ENCODE measurements at regions of chr14 and their contacts with region 1.

Region 1: GRCh38 chr14:105617201-105617777 is 90.9 kb downstream of the TMEM121 start:
- DNase-seq: no peak

Region 2: DNA sequence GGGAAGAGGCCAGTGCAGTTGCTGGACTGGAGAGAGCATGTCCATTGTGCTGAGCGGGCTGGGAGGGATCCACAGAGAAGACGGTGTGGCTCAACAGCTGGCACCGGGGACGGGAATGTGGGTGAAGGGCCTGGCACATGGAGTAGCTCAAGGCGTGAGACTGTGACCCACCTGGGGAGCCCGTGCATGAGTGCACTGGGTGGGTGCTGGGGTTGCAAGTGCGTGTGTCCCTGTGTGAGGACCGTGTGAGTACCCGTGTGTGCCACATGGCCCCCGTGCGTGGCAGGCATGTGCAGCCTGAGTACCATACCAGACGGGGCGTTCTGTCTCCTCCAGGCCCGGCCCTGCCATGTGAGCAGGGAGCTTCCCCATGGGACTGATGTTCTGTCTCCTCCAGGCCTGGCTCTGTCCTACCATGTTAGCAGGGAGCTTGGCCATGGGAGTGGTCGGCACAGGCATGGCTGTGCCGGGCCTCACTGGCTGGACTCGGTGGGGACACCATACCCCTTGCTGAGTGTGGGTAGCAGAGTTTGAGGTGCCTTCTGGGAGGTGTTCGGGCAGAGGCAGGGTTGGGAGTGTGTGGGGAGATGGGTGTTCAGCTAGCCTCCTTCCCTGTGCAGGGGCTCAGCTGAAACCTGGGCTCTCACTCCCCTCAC is 143.5 kb after region 1 on chr14:
- intact Hi-C with region 1: loop called in 1 of 2 experiments (anchors 5 kb)
- DNase-seq: peak; percentile 72